Activated naive CD4-positive, alpha-beta T cell treated with anti-CD3 and anti-CD28 coated beads, Interleukin-2, amount 10 ng/mL, durations not matched to agents 7 days and 5 days (primary cell): ENCODE measurements at regions of chr10 and their contacts with region 1.

Region 1: GRCh38 chr10:101818119-101818871 is at the start of gene OGA:
- DNase-seq: peak; percentile 99
- H3K4me3 Mint-ChIP-seq: peak within 1 kb of the TSS; percentile 89
- H3K27ac Mint-ChIP-seq: peak within 1 kb of the TSS; percentile 96
- H3K4me1 Mint-ChIP-seq: peaks cover 39% of the 10 kb centered on the region
- H3K27me3 Mint-ChIP-seq: peaks cover 4% of the 10 kb centered on the region

Region 2: DNA sequence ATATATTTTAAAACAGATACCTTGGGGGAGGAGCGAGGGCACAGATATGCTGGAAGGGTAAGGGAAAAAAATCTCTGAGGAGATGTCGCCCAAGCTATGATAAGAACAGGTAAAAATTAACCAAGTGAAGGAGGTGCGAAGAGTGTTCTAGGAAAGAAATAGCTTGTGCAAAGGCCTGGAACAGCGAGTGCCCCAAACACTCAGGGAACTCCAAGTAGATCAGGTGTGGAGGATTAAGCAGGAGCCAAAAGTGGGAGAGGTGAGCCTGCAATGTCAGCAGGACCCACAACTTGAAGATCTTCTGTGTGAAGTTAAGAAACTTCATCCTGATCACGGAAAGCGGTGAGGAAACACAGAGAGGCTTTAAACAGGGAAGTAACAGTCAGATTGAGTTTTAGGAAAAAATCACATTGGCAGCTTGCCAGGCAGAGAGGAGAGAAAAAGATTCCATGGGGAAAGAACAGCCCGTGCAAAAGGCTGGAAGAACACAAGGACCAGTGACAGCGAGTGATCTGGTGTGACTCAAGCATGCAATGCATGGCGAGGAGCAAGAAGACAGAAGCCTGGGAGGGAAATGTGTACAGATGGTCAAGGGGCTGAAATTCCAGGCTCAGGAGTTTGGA is 73.1 kb before region 1 on chr10:
- CTCF ChIA-PET with region 1: no interaction called
- DNase-seq: no peak
- H3K4me3 Mint-ChIP-seq: no peak overlapping the region
- H3K27ac Mint-ChIP-seq: no peak overlapping the region
- H3K4me1 Mint-ChIP-seq: no peaks in the 10 kb centered on the region
- H3K27me3 Mint-ChIP-seq: peaks cover 55% of the 10 kb centered on the region

Region 3: GRCh38 chr10:101830322-101831168 is 12.2 kb after region 1 on chr10:
- CTCF ChIA-PET with region 1: interaction called, 11 read pairs
- DNase-seq: peak; percentile 95
- H3K4me3 Mint-ChIP-seq: peak overlapping the region; percentile 74
- H3K27ac Mint-ChIP-seq: peak overlapping the region; percentile 96
- H3K4me1 Mint-ChIP-seq: peaks cover 62% of the 10 kb centered on the region
- H3K27me3 Mint-ChIP-seq: peaks cover 4% of the 10 kb centered on the region

Region 4: GRCh38 chr10:101848894-101849351 is 30.6 kb after region 1 on chr10:
- CTCF ChIA-PET with region 1: no interaction called
- DNase-seq: no peak
- H3K4me3 Mint-ChIP-seq: no peak overlapping the region
- H3K27ac Mint-ChIP-seq: no peak overlapping the region
- H3K4me1 Mint-ChIP-seq: peaks cover 6% of the 10 kb centered on the region
- H3K27me3 Mint-ChIP-seq: peaks cover 12% of the 10 kb centered on the region